Right ventricle myocardium inferior (tissue), 1 donor: ENCODE measurements at regions of chr5 and their contacts with region 1.

Region 1: GRCh38 chr5:143222287-143223231 is 180.9 kb downstream of the NR3C1 start:
- DNase-seq: no peak
- ATAC-seq: peak; percentile 56

Region 2: GRCh38 chr5:143297756-143298155 is 75.2 kb after region 1 on chr5:
- intact Hi-C with region 1: loop called (anchors 5 kb)
- DNase-seq: no peak
- ATAC-seq: no peak

Region 3: DNA sequence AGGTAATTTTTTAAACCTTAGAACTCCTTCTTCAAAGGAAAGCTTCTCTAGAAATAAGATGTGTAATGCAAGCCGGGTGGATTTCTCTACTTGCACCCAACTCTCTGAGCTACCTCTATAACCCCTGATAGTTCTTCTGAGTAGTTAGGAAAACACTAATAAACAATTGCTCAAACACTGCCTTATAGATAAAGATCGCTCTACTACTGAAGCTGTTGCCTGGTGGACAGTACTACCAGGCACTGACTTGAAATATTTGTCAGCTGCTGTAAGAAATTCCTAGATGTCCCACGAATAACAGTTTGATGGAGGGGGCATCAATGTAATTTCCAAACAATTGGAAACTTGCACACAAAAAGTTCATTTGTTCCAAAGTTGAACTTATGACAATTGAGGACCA is 138.9 kb after region 1 on chr5:
- intact Hi-C with region 1: no loop called
- DNase-seq: no peak
- ATAC-seq: no peak